Common myeloid progenitor, CD34-positive (primary cell): ENCODE measurements at regions of chr1 and their contacts with region 1.

Region 1: DNA sequence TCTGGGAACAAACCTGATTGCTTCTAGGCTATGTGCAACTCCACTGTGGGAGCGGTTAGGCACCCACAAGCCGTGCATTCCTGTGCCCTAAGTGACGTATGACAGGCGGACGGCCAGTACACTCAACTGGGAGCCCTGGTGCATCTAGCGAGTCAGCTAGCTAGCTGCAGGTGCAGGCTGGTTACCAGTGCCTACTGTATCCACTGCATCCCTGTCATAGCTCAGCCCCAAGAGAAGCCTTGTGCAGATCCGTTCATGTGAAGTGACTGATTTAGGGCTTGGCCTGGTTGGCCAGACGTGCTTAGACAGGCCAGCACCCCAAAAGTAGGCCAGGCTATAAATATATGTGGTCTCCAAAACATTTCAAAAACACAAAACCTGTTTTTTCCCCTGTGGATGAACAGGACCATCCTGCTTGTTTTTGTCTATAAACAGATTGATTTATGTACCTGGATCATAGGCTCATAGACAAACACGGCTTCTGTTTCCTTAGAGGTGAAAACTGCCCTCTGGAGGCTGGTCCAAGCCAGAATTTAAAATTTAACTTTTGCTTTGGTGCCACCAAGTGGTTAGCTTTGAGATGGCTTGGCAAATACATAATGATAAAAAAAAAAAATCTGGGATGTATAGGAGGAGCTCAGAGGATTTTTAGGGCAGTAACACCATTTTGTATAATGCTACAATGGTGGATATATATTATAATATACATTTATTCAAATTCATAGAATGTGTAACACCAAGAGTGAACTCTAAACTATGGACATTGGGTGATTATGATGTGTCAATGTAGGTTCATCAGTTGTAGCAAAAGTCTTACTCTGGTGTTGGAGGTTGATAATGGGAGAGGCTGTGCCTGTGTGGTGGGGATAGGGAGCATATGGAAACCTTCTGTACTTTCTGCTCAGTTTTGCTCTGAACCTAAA is 68.5 kb downstream of the GIPC2 start:
- DNase-seq: peak; percentile 78 to 86 (median 81)
- H3K4me3 ChIP-seq: no peak overlapping the region
- H3K27ac ChIP-seq: no peak overlapping the region
- H3K4me1 ChIP-seq: no peaks in the 10 kb centered on the region
- H3K27me3 ChIP-seq: no peaks in the 10 kb centered on the region

Region 2: GRCh38 chr1:78004719-78005447 is 109.4 kb before region 1 on chr1 and contains the start of gene DNAJB4:
- CTCF ChIA-PET with region 1: interaction called, 13 read pairs
- POLR2A ChIA-PET with region 1: no interaction called
- DNase-seq: peak; percentile 96 to 98 (median 97)
- H3K4me3 ChIP-seq: peak within 1 kb of the TSS in 6 of 7 experiments; percentile 68 to 100 (median 88)
- H3K27ac ChIP-seq: peak within 1 kb of the TSS; percentile 99
- H3K4me1 ChIP-seq: peaks cover 7 to 36% (median 27%) of the 10 kb centered on the region in 4 experiments
- H3K27me3 ChIP-seq: no peaks in the 10 kb centered on the region

Region 3: GRCh38 chr1:78171736-78172590 is 57.7 kb after region 1 on chr1:
- CTCF ChIA-PET with region 1: no interaction called
- POLR2A ChIA-PET with region 1: no interaction called
- DNase-seq: no peak
- H3K4me3 ChIP-seq: no peak overlapping the region
- H3K27ac ChIP-seq: no peak overlapping the region
- H3K4me1 ChIP-seq: no peaks in the 10 kb centered on the region
- H3K27me3 ChIP-seq: no peaks in the 10 kb centered on the region